Ovary (tissue), 10 donors: ENCODE measurements at regions of chr9 and their contacts with region 1.

Region 1: GRCh38 chr9:77449255-77450039 is 198.7 kb downstream of the GNA14 start:
- DNase-seq: no peak
- H3K4me3 ChIP-seq: no peak overlapping the region
- H3K27ac ChIP-seq: no peak overlapping the region
- H3K4me1 ChIP-seq: no peaks in the 10 kb centered on the region
- H3K27me3 ChIP-seq: no peaks in the 10 kb centered on the region
- CTCF ChIP-seq: no peak
- EP300 ChIP-seq: no peak
- POLR2A ChIP-seq: no peak

Region 2: DNA sequence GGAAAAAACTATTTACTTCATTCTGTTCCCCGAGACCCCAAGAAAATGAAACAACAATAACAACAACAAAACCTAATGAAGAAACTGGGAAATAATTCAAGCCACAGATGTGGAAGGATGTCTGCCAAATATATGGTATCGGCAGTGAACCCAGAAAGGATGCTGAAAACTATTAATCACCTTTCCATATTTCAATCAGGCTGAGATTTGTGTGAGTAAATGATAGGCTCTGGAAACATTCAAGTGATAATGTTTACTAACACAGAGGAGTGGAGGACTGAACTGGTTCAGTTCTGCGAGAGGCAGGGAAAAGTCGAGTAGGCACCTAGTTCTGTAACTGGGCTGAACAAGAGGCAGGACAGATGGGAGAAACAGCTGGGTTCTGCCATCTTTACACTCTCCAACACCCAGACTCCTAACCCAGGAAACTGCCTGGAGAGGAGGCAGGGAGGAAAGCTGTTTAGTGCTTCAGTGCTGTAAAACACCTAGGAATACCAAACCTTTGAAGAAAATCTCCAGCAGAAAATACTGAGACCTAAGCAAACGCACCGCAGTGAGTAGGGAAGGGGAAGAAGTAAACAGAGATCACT is 295.5 kb after region 1 on chr9:
- intact Hi-C with region 1: loop called in 2 of 4 experiments (anchors 5 to 10 kb)
- DNase-seq: no peak
- H3K4me3 ChIP-seq: no peak overlapping the region
- H3K27ac ChIP-seq: no peak overlapping the region
- H3K4me1 ChIP-seq: peaks cover 1% of the 10 kb centered on the region
- H3K27me3 ChIP-seq: no peaks in the 10 kb centered on the region
- CTCF ChIP-seq: no peak
- EP300 ChIP-seq: no peak
- POLR2A ChIP-seq: no peak